Left cardiac atrium (tissue), 4 donors: ENCODE measurements at regions of chr5 and their contacts with region 1.

Region 1: DNA sequence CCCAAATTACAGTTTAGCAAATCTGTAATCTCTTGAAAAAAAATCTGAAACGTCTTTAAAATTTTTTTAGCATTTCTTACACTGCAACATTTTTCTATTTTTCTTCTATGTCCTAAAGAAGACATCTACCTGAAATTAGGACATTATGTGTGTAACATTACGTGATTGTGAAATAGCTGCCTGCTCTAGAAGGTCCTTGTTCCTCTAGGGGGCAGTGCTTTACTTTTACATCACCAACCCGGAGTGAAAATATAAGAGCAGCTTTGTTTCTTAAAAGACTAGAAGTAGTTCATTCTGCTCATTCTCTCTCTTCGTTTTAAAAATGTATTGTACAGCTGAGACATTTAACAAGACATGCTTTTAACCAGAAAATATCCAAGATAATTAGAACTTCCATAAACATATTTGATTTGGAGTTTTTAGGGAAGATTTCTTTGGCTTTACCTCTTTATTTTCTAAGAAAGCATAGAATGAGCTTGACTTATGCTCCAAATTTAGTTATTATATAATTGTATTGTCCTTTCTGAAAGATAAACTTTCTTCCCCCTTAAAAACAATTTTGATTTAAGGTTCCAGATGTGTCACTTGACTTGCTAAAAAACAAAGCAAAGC is 48.1 kb upstream of the RIOK2 start:
- DNase-seq: no peak
- ATAC-seq: peak; percentile 82 to 84

Region 2: DNA sequence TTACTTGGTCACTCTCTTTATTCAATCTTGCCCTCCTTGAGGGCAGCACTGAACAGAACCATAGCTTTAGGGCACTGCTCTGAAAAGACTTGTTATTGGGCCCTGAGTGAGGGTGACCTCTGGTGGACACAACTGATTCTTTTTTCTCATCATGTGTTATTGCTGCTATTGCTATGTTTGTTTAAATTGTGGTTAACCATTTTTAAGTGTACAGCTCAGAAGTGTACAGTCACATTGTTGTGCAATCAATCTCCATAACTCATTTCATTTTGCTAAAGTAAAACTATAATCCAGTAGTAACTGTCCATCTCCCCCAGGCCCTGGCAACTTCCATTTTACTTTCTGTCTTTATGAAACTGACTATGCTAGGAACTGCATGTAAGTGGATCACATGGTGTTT is 303.0 kb after region 1 on chr5:
- intact Hi-C with region 1: loop called in 1 of 2 experiments (anchors 5 kb)
- DNase-seq: peak; percentile 22
- ATAC-seq: peak; percentile 74 to 78

Region 3: GRCh38 chr5:98768160-98769005 is 1537.3 kb after region 1 on chr5:
- intact Hi-C with region 1: loop called in 1 of 2 experiments (anchors 5 kb)
- DNase-seq: no peak
- ATAC-seq: peak; percentile 39 to 49

Region 4: GRCh38 chr5:98827161-98827560 is 1596.0 kb after region 1 on chr5:
- intact Hi-C with region 1: loop called in 1 of 2 experiments (anchors 5 kb)
- DNase-seq: no peak
- ATAC-seq: no peak